Posterior cingulate gyrus (tissue), 11 donors: ENCODE measurements at regions of chr5 and their contacts with region 1.

Region 1: GRCh38 chr5:67493676-67494075 is 297.1 kb upstream of the CD180 start:
- DNase-seq: peak; percentile 41 to 95 (median 68)

Region 2: DNA sequence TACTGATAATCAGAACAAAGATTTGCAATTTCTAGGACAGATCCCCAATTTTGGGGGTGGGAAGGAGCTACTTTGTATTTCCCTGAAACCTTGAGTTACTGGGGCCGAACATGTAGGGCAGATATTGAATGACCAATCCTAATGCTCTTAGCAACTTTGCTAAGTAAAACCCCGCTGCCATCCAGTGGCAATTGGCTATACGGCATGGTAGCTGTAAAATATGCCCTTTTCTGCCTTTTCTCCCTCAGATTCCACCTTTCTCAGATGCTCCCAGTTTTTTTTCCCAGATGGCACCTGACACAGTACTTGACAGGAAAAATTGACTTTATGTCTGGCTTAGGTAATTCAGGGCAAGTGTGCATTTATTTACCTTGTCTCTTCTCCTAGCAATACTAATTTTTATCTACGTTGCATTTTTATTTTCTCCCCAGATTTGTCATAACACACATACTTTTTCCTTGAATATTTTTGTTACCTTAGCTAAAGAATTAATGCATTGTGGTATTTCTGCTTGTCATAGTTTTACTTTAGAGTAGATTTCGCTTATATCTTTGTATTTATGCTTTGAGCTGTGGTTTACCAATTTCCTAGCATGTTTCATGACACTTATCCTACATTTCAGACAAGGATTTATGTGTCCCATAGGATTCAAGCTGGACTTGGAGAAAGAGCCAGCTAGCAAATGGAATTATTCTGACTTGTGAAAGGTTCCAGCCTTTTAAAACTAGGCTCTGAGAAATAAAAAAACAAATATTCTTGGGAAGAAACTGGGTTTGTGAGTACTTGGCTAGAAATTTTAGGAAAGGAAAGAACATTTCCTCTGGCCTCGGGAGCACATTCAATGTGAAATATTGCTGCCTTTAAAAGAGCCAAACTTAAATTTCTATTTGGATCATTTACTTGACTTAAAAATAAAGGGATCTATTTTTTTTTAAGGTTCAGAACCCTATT is 759.3 kb after region 1 on chr5:
- intact Hi-C with region 1: loop called (anchors 2 kb)
- DNase-seq: peak in 8 of 10 donors; percentile 48 to 90 (median 64)